ENCODE measurements at regions of chr15 and their contacts with region 1.

Region 1: GRCh38 chr15:52658955-52659354 is 20.2 kb downstream of the ATOSA start:
- DNase-seq: no peak
- ATAC-seq: no peak

Region 2: GRCh38 chr15:52730173-52730572 is 71.2 kb after region 1 on chr15:
- intact Hi-C with region 1: loop called in 1 of 2 experiments (anchors 5 kb)
- DNase-seq: no peak
- ATAC-seq: peak; percentile 20